ENCODE measurements at regions of chr15 and their contacts with region 1.

Region 1: DNA sequence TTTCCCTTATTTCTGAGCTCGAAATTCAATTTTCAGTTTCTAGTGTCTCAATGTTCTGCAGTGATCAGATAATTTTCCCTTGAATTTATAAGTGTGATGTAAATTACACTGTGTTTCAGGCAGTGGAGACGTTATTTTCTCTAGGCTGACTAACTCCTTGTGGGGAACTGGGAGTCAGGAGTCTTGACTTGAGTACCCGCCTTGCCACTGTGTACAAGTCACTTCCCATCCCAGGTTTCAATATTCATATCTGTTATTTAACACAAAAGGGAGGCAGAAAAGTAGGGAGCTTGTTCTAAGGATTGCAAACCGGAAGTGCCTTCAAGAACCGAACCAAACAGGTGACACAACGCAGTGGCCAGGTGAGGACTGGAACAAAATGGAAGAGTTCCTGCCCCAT is 196.5 kb downstream of the MEX3B start:
- DNase-seq: no peak
- ATAC-seq: no peak
- H3K4me3 ChIP-seq: no peak overlapping the region
- H3K27ac ChIP-seq: no peak overlapping the region
- H3K4me1 ChIP-seq: no peaks in the 10 kb centered on the region
- H3K27me3 ChIP-seq: peaks cover 0 to 5% (median 0%) of the 10 kb centered on the region in 7 donors
- CTCF ChIP-seq: no peak

Region 2: GRCh38 chr15:81531109-81531592 is 318.1 kb before region 1 on chr15:
- intact Hi-C with region 1: no loop called
- DNase-seq: peak; percentile 15
- ATAC-seq: peak in 4 of 8 donors; percentile 50 to 65 (median 58)
- H3K4me3 ChIP-seq: no peak overlapping the region
- H3K27ac ChIP-seq: no peak overlapping the region
- H3K4me1 ChIP-seq: peaks cover 0 to 22% (median 13%) of the 10 kb centered on the region in 9 donors
- H3K27me3 ChIP-seq: no peaks in the 10 kb centered on the region
- CTCF ChIP-seq: no peak

Region 3: GRCh38 chr15:81880314-81880713 is 31.0 kb after region 1 on chr15:
- intact Hi-C with region 1: loop called in 1 of 10 experiments (anchors 5 kb)
- DNase-seq: no peak
- ATAC-seq: no peak
- H3K4me3 ChIP-seq: no peak overlapping the region
- H3K27ac ChIP-seq: no peak overlapping the region
- H3K4me1 ChIP-seq: no peaks in the 10 kb centered on the region
- H3K27me3 ChIP-seq: no peaks in the 10 kb centered on the region
- CTCF ChIP-seq: no peak

Measured in heart right ventricle (tissue), 16 donors.